B cell (primary cell): ENCODE measurements at regions of chr5 and their contacts with region 1.

Region 1: DNA sequence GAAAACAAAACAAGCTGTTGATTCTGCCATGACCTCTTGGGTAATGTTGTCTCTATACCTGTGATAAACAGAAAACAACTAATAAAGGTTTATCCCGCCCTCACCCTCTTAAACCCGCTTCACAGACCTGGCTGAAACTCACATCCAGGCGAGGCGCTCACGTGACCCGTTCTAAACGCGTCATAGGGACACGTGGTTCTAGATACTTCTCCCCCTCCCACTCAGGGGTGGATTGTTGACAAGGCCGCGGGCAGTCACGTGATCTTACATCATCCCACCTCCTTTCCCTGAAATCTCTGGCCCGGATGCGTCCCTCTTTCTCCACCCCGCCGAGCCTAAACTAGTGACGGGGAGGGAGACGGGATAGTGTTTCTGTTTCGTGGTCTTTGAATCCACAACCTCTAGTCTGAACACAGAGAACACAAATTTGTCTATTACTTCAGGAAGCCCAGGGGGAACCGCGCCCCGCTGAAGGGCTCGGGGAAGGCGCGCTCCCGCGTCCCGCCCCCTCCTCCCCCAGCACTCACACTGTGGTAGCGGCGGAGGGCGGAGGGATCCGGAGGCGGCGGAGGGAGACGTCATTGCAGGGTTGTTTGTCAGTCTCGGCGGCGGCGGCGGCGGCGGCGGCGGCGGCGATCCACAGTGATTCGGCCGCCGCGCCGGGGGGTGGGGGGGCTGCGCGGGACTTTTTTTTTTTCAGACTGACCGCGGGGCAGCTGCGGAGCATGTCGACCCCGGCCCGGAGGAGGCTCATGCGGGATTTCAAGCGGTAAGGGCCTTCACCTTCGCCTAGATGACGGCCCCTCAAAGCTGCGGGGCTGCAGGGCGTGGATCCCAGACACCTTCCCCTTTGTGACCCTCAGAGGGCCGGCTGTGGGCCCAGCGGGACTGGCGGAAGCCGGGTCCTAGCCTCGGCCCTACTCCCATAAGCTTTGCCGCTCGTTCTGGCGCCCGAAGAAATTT is at the start of gene UBE2B:
- DNase-seq: peak; percentile 99
- ATAC-seq: peak; percentile 79
- H3K4me3 ChIP-seq: peak within 1 kb of the TSS; percentile 78 to 99 (median 92)
- H3K4me3 Mint-ChIP-seq: peak within 1 kb of the TSS; percentile 98
- H3K27ac ChIP-seq: peak within 1 kb of the TSS; percentile 97 to 99
- H3K27ac Mint-ChIP-seq: peak within 1 kb of the TSS; percentile 100
- H3K4me1 ChIP-seq: peaks cover 24 to 32% of the 10 kb centered on the region in 2 donors
- H3K4me1 Mint-ChIP-seq: peaks cover 48% of the 10 kb centered on the region
- H3K27me3 ChIP-seq: no peaks in the 10 kb centered on the region
- H3K27me3 Mint-ChIP-seq: no peaks in the 10 kb centered on the region
- CTCF ChIP-seq: no peak
- total RNA-seq, gene UBE2B: 106 and 110 TPM in 2 replicates

Region 2: DNA sequence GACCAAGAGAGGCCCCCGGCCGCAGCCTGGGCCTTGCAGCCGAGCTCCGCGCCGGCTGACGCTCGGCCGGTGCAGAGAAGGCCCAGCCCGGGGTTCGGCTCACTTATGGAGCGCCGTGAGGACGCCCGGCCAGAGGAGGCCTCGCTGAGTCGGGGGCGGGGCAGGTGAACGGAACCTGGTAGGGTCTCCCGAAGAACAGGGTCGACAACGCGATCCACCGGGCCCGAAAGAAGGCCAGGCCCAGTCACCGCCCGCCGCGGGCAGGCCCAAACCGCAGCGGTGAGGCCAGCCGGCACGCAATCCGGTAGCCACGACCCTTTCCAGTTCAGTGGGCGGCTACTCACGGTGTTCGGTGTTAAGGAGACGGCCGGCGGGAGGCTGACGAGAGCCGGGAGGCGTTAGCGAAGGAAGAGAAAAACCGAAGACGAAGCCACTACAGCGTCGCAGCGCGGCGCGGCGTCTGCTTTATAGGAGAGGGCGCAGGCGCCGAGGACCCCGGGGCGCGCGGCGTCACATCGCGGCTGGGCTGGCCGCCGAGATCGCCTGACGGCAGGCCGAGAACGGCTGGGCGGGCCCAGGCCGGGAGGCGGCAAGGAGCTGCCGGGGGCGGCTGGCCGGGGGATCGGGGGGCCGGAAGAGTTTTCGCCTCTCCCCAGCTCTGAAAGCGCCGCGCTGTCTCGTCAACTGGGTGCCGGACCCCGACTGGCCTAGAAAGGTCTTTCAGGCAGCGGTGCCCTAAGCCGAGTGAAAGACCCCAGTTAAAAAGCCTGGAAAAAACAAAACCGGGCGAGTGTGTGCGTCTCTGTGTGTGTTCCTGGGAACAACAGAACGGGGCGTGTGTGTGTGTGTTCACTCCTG is 194.4 kb before region 1 on chr5 and contains the start of gene SKP1:
- CTCF ChIA-PET with region 1: no interaction called
- POLR2A ChIA-PET with region 1: interaction called, 3 read pairs
- intact Hi-C with region 1: loop called (anchors 2 kb)
- DNase-seq: peak; percentile 95
- ATAC-seq: peak; percentile 86
- H3K4me3 ChIP-seq: peak within 1 kb of the TSS; percentile 73 to 100 (median 93)
- H3K4me3 Mint-ChIP-seq: peak within 1 kb of the TSS; percentile 96
- H3K27ac ChIP-seq: peak within 1 kb of the TSS; percentile 98 to 100
- H3K27ac Mint-ChIP-seq: peak within 1 kb of the TSS; percentile 98
- H3K4me1 ChIP-seq: peaks cover 25 to 27% of the 10 kb centered on the region in 2 donors
- H3K4me1 Mint-ChIP-seq: peaks cover 29% of the 10 kb centered on the region
- H3K27me3 ChIP-seq: no peaks in the 10 kb centered on the region
- H3K27me3 Mint-ChIP-seq: no peaks in the 10 kb centered on the region
- CTCF ChIP-seq: no peak
- total RNA-seq, gene SKP1: 182 and 186 TPM in 2 replicates

Region 3: GRCh38 chr5:134411546-134412266 is 40.6 kb after region 1 on chr5 and contains the start of gene CDKN2AIPNL:
- CTCF ChIA-PET with region 1: interaction called, 8 read pairs
- POLR2A ChIA-PET with region 1: interaction called, 9 read pairs
- intact Hi-C with region 1: loop called (anchors 1 kb)
- DNase-seq: peak; percentile 92
- ATAC-seq: peak; percentile 100
- H3K4me3 ChIP-seq: peak within 1 kb of the TSS; percentile 6 to 99 (median 87)
- H3K4me3 Mint-ChIP-seq: peak within 1 kb of the TSS; percentile 94
- H3K27ac ChIP-seq: peak within 1 kb of the TSS; percentile 64 to 68
- H3K27ac Mint-ChIP-seq: peak within 1 kb of the TSS; percentile 93
- H3K4me1 ChIP-seq: peaks cover 15 to 19% of the 10 kb centered on the region in 2 donors
- H3K4me1 Mint-ChIP-seq: peaks cover 39% of the 10 kb centered on the region
- H3K27me3 ChIP-seq: no peaks in the 10 kb centered on the region
- H3K27me3 Mint-ChIP-seq: no peaks in the 10 kb centered on the region
- CTCF ChIP-seq: peak; percentile 83
- total RNA-seq, gene CDKN2AIPNL: 15.8 and 17.2 TPM in 2 replicates

Region 4: DNA sequence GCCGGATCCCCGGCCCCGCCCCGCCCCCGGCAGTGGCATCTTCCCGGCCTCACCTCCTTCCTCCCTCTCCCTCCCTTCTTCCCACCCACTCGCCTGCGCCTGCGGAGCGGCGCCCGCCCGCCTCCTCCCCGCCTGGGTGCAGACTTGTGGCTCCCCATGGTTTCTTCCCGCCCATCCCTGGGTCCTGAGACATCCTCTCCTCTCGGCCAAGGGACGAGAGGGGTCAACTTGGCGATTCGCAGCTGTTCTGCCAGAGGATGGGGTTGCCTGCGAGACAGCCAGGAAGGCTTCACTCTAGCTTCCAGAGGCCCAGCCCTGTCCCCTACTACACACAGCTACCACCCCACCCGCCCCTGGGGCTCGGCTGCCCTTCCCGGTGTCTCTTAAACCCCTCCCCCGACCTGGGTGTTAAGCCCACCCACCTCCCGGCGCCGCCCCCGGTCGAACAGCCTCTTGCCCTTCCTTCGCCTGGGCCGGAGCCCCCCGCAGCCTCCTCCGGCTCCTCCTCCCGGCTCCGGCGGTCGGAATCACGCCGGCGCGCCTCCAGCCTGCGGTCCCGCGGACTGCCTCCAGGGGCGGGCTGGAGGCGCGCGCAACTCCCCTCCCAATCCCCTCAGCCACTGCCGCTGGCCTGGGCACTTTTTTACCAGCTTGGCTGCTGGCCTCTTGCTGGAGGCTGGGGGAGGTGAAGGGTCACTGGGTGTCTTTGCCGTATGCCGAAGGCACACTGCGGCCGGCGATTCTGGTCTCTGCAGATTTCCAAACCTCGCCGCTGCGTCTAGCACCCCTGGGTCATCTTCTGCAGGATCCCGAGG is 156.2 kb after region 1 on chr5:
- CTCF ChIA-PET with region 1: interaction called, 5 read pairs
- POLR2A ChIA-PET with region 1: interaction called, 36 read pairs
- intact Hi-C with region 1: loop called (anchors 1 kb)
- DNase-seq: peak; percentile 82
- ATAC-seq: peak; percentile 26
- H3K4me3 ChIP-seq: peak overlapping the region; percentile 70 to 100 (median 98)
- H3K4me3 Mint-ChIP-seq: peak overlapping the region; percentile 99
- H3K27ac ChIP-seq: peak overlapping the region; percentile 54 to 99
- H3K27ac Mint-ChIP-seq: peak overlapping the region; percentile 99
- H3K4me1 ChIP-seq: peaks cover 34 to 53% of the 10 kb centered on the region in 2 donors
- H3K4me1 Mint-ChIP-seq: peaks cover 57% of the 10 kb centered on the region
- H3K27me3 ChIP-seq: no peaks in the 10 kb centered on the region
- H3K27me3 Mint-ChIP-seq: no peaks in the 10 kb centered on the region
- CTCF ChIP-seq: peak; percentile 80

Region 5: GRCh38 chr5:134577796-134578363 is 206.7 kb after region 1 on chr5:
- CTCF ChIA-PET with region 1: interaction called, 10 read pairs
- POLR2A ChIA-PET with region 1: no interaction called
- intact Hi-C with region 1: no loop called
- DNase-seq: peak; percentile 84
- ATAC-seq: peak; percentile 71
- H3K4me3 ChIP-seq: no peak overlapping the region
- H3K4me3 Mint-ChIP-seq: no peak overlapping the region
- H3K27ac ChIP-seq: peak overlapping the region in 1 of 2 donors; percentile 4
- H3K27ac Mint-ChIP-seq: peak overlapping the region; percentile 60
- H3K4me1 ChIP-seq: no peaks in the 10 kb centered on the region
- H3K4me1 Mint-ChIP-seq: peaks cover 4% of the 10 kb centered on the region
- H3K27me3 ChIP-seq: no peaks in the 10 kb centered on the region
- H3K27me3 Mint-ChIP-seq: no peaks in the 10 kb centered on the region
- CTCF ChIP-seq: peak; percentile 86

Region 6: GRCh38 chr5:134648425-134649162 is 277.4 kb after region 1 on chr5 and contains the start of gene SEC24A:
- CTCF ChIA-PET with region 1: no interaction called
- POLR2A ChIA-PET with region 1: no interaction called
- intact Hi-C with region 1: loop called (anchors 1 kb)
- DNase-seq: peak; percentile 94
- ATAC-seq: peak; percentile 83
- H3K4me3 ChIP-seq: peak within 1 kb of the TSS; percentile 80 to 91 (median 88)
- H3K4me3 Mint-ChIP-seq: peak within 1 kb of the TSS; percentile 96
- H3K27ac ChIP-seq: peak within 1 kb of the TSS; percentile 94 to 99
- H3K27ac Mint-ChIP-seq: peak within 1 kb of the TSS; percentile 94
- H3K4me1 ChIP-seq: peaks cover 17 to 18% of the 10 kb centered on the region in 2 donors
- H3K4me1 Mint-ChIP-seq: peaks cover 24% of the 10 kb centered on the region
- H3K27me3 ChIP-seq: no peaks in the 10 kb centered on the region
- H3K27me3 Mint-ChIP-seq: no peaks in the 10 kb centered on the region
- CTCF ChIP-seq: no peak
- total RNA-seq, gene SEC24A: 13.0 and 14.3 TPM in 2 replicates